Activated CD8-positive, alpha-beta T cell treated with anti-CD3 and anti-CD28 coated beads for 36 hours (primary cell): ENCODE measurements at regions of chr5 and their contacts with region 1.

Region 1: GRCh38 chr5:134304311-134304710 is 62.7 kb downstream of the CDKL3 start:
- DNase-seq: no peak
- ATAC-seq: no peak
- H3K4me3 Mint-ChIP-seq: no peak overlapping the region
- H3K27ac Mint-ChIP-seq: no peak overlapping the region
- H3K4me1 Mint-ChIP-seq: peaks cover 7% of the 10 kb centered on the region
- H3K27me3 Mint-ChIP-seq: no peaks in the 10 kb centered on the region
- CTCF ChIP-seq: no peak

Region 2: GRCh38 chr5:133930061-133930812 is 374.1 kb before region 1 on chr5:
- CTCF ChIA-PET with region 1: no interaction called
- POLR2A ChIA-PET with region 1: no interaction called
- intact Hi-C with region 1: no loop called
- DNase-seq: peak; percentile 90
- ATAC-seq: peak; percentile 84
- H3K4me3 Mint-ChIP-seq: peak overlapping the region; percentile 68
- H3K27ac Mint-ChIP-seq: peak overlapping the region; percentile 96
- H3K4me1 Mint-ChIP-seq: peaks cover 60% of the 10 kb centered on the region
- H3K27me3 Mint-ChIP-seq: no peaks in the 10 kb centered on the region
- CTCF ChIP-seq: no peak

Region 3: GRCh38 chr5:134289509-134290113 is 14.7 kb before region 1 on chr5:
- CTCF ChIA-PET with region 1: no interaction called
- POLR2A ChIA-PET with region 1: no interaction called
- intact Hi-C with region 1: no loop called
- DNase-seq: peak; percentile 55
- ATAC-seq: peak; percentile 77
- H3K4me3 Mint-ChIP-seq: no peak overlapping the region
- H3K27ac Mint-ChIP-seq: no peak overlapping the region
- H3K4me1 Mint-ChIP-seq: peaks cover 4% of the 10 kb centered on the region
- H3K27me3 Mint-ChIP-seq: peaks cover 5% of the 10 kb centered on the region
- CTCF ChIP-seq: peak; percentile 70

Region 4: DNA sequence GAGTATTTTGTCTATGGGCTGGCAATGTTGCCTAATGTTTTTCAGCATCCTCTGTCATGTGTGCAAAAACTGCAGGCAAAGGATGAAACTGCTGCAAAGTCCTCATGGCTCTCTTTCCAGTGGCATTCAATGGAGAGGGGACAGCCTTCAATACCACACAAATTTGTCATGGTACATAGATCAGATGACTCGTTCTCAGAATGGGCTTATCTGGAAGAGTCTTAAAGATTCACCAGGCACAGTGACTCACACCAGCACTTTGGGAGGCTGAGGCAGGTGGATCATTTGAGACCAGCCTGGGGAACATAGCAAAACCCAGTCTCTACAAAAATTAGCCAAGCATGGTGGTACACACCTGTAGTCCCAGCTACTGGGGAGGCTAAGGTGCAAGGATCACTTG is 102.1 kb after region 1 on chr5:
- CTCF ChIA-PET with region 1: interaction called, 8 read pairs
- POLR2A ChIA-PET with region 1: no interaction called
- intact Hi-C with region 1: loop called (anchors 10 kb)
- DNase-seq: peak; percentile 17
- ATAC-seq: peak; percentile 56
- H3K4me3 Mint-ChIP-seq: no peak overlapping the region
- H3K27ac Mint-ChIP-seq: peak overlapping the region; percentile 52
- H3K4me1 Mint-ChIP-seq: peaks cover 33% of the 10 kb centered on the region
- H3K27me3 Mint-ChIP-seq: no peaks in the 10 kb centered on the region
- CTCF ChIP-seq: no peak

Region 5: GRCh38 chr5:134503088-134503946 is 199.0 kb after region 1 on chr5:
- CTCF ChIA-PET with region 1: no interaction called
- POLR2A ChIA-PET with region 1: no interaction called
- intact Hi-C with region 1: no loop called
- DNase-seq: peak; percentile 91
- ATAC-seq: peak; percentile 97
- H3K4me3 Mint-ChIP-seq: peak overlapping the region; percentile 21
- H3K27ac Mint-ChIP-seq: peak overlapping the region; percentile 96
- H3K4me1 Mint-ChIP-seq: peaks cover 28% of the 10 kb centered on the region
- H3K27me3 Mint-ChIP-seq: no peaks in the 10 kb centered on the region
- CTCF ChIP-seq: no peak

Region 6: DNA sequence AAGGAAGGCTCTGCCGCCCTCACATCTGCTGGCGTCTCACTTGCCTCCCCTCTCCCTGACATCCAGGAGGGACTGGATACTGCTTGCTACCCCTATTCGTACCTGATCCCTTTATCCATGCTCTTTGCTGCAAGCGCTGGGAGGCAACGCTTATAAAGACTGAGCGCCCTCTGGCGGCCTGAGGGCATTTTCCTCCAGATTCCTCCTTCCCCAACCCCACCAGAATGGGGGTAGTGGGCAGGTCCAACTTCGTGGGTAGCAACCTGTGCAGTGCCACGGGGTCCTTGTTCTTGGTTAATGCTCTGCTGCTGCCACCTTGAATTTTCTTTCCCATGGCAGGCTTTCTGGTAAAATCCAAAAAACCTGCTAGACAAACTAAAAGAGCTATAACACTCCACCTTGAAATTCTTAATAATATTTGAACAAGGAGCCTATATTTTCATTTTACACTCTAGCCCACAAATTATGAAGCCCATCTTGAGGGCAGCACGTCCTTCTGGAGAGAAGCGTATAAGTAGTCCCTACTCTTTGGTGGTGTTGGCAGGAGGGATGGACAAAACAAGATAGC is 273.6 kb after region 1 on chr5:
- CTCF ChIA-PET with region 1: interaction called, 14 read pairs
- POLR2A ChIA-PET with region 1: no interaction called
- intact Hi-C with region 1: no loop called
- DNase-seq: peak; percentile 89
- ATAC-seq: peak; percentile 81
- H3K4me3 Mint-ChIP-seq: no peak overlapping the region
- H3K27ac Mint-ChIP-seq: peak overlapping the region; percentile 25
- H3K4me1 Mint-ChIP-seq: peaks cover 2% of the 10 kb centered on the region
- H3K27me3 Mint-ChIP-seq: no peaks in the 10 kb centered on the region
- CTCF ChIP-seq: peak; percentile 95